ENCODE measurements at regions of chr6 and their contacts with region 1.

Region 1: GRCh38 chr6:135438907-135439535 is 58.5 kb downstream of the AHI1 start:
- DNase-seq: peak; percentile 17
- ATAC-seq: peak; percentile 83
- H3K4me3 ChIP-seq: no peak overlapping the region
- H3K27ac ChIP-seq: no peak overlapping the region
- H3K4me1 ChIP-seq: peaks cover 11% of the 10 kb centered on the region
- H3K27me3 ChIP-seq: no peaks in the 10 kb centered on the region
- CTCF ChIP-seq: peak; percentile 55 to 66 (median 58)
- EP300 ChIP-seq: no peak
- POLR2A ChIP-seq: no peak
- RAD21 ChIP-seq: peak; percentile 74

Region 2: GRCh38 chr6:134161036-134161435 is 1278.0 kb before region 1 on chr6:
- CTCF ChIA-PET with region 1: interaction called, 3 read pairs
- POLR2A ChIA-PET with region 1: no interaction called
- RAD21 ChIA-PET with region 1: interaction called, 3 read pairs
- SMC1A ChIA-PET with region 1: no interaction called
- in situ Hi-C with region 1: loop called (anchors 5 kb)
- intact Hi-C with region 1: no loop called
- DNase-seq: no peak
- ATAC-seq: no peak
- H3K4me3 ChIP-seq: no peak overlapping the region
- H3K27ac ChIP-seq: no peak overlapping the region
- H3K4me1 ChIP-seq: no peaks in the 10 kb centered on the region
- H3K27me3 ChIP-seq: no peaks in the 10 kb centered on the region
- CTCF ChIP-seq: no peak
- EP300 ChIP-seq: no peak
- POLR2A ChIP-seq: no peak
- RAD21 ChIP-seq: no peak

Region 3: DNA sequence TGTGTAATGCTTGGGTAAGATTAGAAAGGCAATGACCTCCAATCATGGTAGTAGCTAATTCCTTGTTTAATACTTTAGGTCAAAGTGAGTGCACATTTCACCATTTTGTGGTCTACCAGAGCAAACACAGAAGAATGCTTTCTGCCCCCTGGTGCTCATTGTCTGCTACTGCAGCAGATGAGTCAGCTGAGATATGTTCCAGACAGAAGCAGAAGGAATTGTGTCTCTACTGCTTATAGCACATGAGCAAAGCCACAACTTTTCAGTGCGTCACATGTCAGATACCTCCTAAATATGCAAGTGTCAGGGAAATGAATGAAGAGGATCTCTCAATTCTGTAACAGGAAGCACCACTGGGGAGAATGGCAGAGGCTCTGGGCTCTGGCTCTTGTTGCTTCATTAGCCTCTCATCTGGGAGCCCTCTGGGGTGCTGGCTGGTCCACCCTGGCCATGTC is 798.0 kb before region 1 on chr6:
- CTCF ChIA-PET with region 1: interaction called, 3 read pairs
- POLR2A ChIA-PET with region 1: no interaction called
- RAD21 ChIA-PET with region 1: no interaction called
- SMC1A ChIA-PET with region 1: no interaction called
- in situ Hi-C with region 1: loop called (anchors 10 kb)
- intact Hi-C with region 1: no loop called
- DNase-seq: peak; percentile 45
- ATAC-seq: peak; percentile 90
- H3K4me3 ChIP-seq: no peak overlapping the region
- H3K27ac ChIP-seq: no peak overlapping the region
- H3K4me1 ChIP-seq: no peaks in the 10 kb centered on the region
- H3K27me3 ChIP-seq: no peaks in the 10 kb centered on the region; a peak in 1 of 4 replicates
- CTCF ChIP-seq: peak; percentile 89 to 98 (median 93); a peak in 5 of 6 replicates
- EP300 ChIP-seq: no peak
- POLR2A ChIP-seq: no peak
- RAD21 ChIP-seq: peak; percentile 93

Region 4: GRCh38 chr6:134979142-134979541 is 459.9 kb before region 1 on chr6:
- CTCF ChIA-PET with region 1: no interaction called
- POLR2A ChIA-PET with region 1: no interaction called
- RAD21 ChIA-PET with region 1: no interaction called
- SMC1A ChIA-PET with region 1: no interaction called
- in situ Hi-C with region 1: loop called (anchors 25 kb)
- intact Hi-C with region 1: no loop called
- DNase-seq: peak; percentile 47
- ATAC-seq: peak; percentile 95
- H3K4me3 ChIP-seq: no peak overlapping the region
- H3K27ac ChIP-seq: peak overlapping the region; percentile 40; the same call in 1 of the 2 replicates
- H3K4me1 ChIP-seq: peaks cover 12% of the 10 kb centered on the region; the same call in 1 of the 2 replicates
- H3K27me3 ChIP-seq: no peaks in the 10 kb centered on the region
- CTCF ChIP-seq: no peak
- EP300 ChIP-seq: peak; percentile 53 to 88; a peak in 2 of 4 replicates
- POLR2A ChIP-seq: no peak
- RAD21 ChIP-seq: no peak

Region 5: DNA sequence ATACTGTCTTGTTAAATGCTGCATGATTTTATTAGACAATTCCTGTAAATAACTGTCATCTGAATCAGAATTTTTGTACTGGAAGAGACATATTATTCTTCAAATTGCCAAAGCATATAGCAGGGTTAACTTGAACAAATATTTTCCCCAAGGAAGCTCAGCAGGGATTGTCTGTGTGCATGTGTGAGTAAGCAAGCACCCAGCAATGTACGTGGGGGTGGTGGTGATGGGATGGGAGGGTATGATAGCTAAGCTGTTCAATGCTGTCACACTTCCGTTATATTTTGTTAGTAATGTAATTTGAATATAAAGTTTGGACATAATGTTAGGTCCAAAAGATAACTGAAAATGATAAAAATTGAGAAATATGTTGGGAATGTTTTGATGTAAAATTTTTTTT is 139.8 kb before region 1 on chr6:
- CTCF ChIA-PET with region 1: no interaction called
- POLR2A ChIA-PET with region 1: no interaction called
- RAD21 ChIA-PET with region 1: no interaction called
- SMC1A ChIA-PET with region 1: no interaction called
- in situ Hi-C with region 1: no loop called
- intact Hi-C with region 1: no loop called
- DNase-seq: no peak
- ATAC-seq: no peak
- H3K4me3 ChIP-seq: no peak overlapping the region
- H3K27ac ChIP-seq: no peak overlapping the region
- H3K4me1 ChIP-seq: no peaks in the 10 kb centered on the region
- H3K27me3 ChIP-seq: no peaks in the 10 kb centered on the region
- CTCF ChIP-seq: no peak
- EP300 ChIP-seq: no peak
- POLR2A ChIP-seq: no peak
- RAD21 ChIP-seq: no peak

Region 6: GRCh38 chr6:135423649-135424128 is 15.3 kb before region 1 on chr6:
- CTCF ChIA-PET with region 1: interaction called, 15 read pairs
- POLR2A ChIA-PET with region 1: no interaction called
- RAD21 ChIA-PET with region 1: interaction called, 6 read pairs
- SMC1A ChIA-PET with region 1: interaction called, 10 read pairs
- in situ Hi-C with region 1: no loop called
- intact Hi-C with region 1: no loop called
- DNase-seq: peak; percentile 16
- ATAC-seq: peak; percentile 97
- H3K4me3 ChIP-seq: no peak overlapping the region
- H3K27ac ChIP-seq: no peak overlapping the region
- H3K4me1 ChIP-seq: peaks cover 4% of the 10 kb centered on the region; the same call in 1 of the 2 replicates
- H3K27me3 ChIP-seq: no peaks in the 10 kb centered on the region
- CTCF ChIP-seq: peak; percentile 61 to 80 (median 68)
- EP300 ChIP-seq: no peak
- POLR2A ChIP-seq: no peak
- RAD21 ChIP-seq: peak; percentile 88